Prostate gland (tissue), 2 donors: ENCODE measurements at regions of chr19 and their contacts with region 1.

Region 1: GRCh38 chr19:49443366-49444099 is 2.2 kb upstream of the SLC17A7 start:
- DNase-seq: peak; percentile 94
- H3K4me3 ChIP-seq: peak overlapping the region; percentile 38 to 52
- H3K27ac ChIP-seq: peak overlapping the region; percentile 50 to 76
- H3K4me1 ChIP-seq: no peaks in the 10 kb centered on the region
- H3K27me3 ChIP-seq: peaks cover 15% of the 10 kb centered on the region
- CTCF ChIP-seq: peak; percentile 69 to 91 (median 86)
- POLR2A ChIP-seq: no peak

Region 2: GRCh38 chr19:49224856-49225255 is 218.7 kb before region 1 on chr19:
- intact Hi-C with region 1: loop called (anchors 5 kb)
- DNase-seq: peak; percentile 36
- H3K4me3 ChIP-seq: no peak overlapping the region
- H3K27ac ChIP-seq: no peak overlapping the region
- H3K4me1 ChIP-seq: no peaks in the 10 kb centered on the region
- H3K27me3 ChIP-seq: no peaks in the 10 kb centered on the region
- CTCF ChIP-seq: peak in 3 of 4 experiments; percentile 27 to 62 (median 51)
- POLR2A ChIP-seq: no peak

Region 3: DNA sequence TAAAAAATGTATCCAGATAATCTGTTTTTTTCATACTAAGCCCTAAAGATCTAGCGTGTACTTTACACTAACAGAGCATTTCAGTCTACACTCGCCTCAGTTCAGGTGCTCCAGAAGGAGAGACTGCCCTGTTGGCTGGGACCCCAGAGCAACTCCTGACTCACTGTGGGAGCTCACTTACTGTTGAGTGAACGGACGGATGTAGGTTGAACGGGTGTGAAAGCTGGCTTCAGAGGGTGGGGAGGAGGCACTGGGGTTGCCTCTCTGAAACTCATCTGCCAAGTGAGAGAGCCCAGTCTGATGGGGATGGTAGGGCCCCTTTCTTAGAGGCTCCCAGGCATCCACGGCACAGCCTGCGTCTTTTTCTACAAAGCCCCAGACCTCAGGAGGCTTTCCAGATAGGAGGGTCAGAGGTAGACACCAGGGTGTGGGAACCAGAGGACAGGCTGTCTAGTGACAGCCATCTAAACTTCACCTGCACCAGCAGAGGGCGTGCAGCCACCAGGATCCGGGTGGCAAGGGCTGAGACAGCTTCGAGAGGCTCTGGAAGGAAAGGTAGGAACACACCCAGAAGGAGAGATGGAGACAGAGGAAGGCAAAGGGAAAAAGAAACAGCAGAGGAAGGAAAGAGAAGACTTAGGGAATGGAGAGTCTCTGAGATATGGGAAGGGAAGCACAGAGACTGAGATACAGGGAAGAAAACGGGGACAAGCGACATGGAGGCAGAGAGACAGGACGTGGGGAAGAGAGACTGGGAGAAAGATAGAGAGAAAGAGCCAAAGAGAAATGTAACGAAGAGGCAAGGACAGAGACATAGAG is 51.7 kb before region 1 on chr19:
- intact Hi-C with region 1: loop called (anchors 2 kb)
- DNase-seq: peak; percentile 76
- H3K4me3 ChIP-seq: no peak overlapping the region
- H3K27ac ChIP-seq: no peak overlapping the region
- H3K4me1 ChIP-seq: no peaks in the 10 kb centered on the region
- H3K27me3 ChIP-seq: no peaks in the 10 kb centered on the region
- CTCF ChIP-seq: peak in 3 of 4 experiments; percentile 73 to 87 (median 85)
- POLR2A ChIP-seq: no peak